H1 (cell line): ENCODE measurements at regions of chr10 and their contacts with region 1.

Region 1: DNA sequence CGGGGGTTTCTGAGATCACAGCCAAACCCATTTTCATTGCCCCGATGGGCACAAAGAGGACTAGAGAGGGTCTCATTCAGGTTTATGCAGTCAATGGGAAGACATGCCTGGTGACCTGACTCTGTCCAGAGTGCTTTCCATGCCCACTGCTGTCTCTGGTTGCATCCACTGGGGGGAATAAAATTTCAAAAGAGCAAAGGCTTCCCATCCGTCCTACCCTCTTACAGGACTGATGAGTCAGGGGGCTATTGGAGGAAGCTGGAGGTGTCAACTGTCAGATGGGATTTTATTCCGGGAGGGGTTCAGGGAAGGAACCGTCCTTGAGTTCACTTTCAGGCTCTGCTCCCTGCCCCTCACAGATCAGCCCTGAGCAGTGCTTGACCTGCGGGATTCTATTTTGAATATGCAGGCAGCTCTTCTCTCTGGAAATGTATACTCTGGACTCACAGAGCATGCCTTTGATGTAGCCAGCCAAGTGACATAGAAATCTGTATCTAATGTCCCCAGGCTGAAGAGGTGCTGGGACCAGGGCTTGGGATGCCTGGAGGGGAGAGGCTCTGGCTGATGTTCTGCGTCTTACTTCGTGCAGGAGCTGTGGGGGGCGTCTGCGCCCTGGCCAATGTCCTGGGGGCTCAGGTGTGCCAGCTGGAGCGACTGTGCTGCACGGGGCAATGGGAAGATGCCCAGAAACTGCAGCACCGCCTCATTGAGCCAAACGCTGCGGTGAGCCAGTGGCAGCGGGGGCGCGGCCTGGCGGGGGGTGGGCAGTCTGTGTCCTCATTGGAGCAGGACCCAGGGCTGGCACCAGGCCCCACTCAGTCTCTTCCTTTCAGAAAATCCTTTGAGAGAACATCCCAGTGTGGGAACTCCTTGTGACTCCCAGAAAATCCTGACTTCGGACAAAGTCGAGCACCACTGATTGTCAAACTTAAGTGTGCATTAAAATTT is 12.0 kb downstream of the C10orf62 start:
- DNase-seq: no peak
- H3K4me3 ChIP-seq: no peak overlapping the region
- H3K27ac ChIP-seq: no peak overlapping the region
- H3K4me1 ChIP-seq: peaks cover 0 to 2% (median under 1%) of the 10 kb centered on the region in 4 experiments; a peak in 1 of 7 replicates
- H3K27me3 ChIP-seq: no peaks in the 10 kb centered on the region
- CTCF ChIP-seq: no peak
- EP300 ChIP-seq: no peak
- POLR2A ChIP-seq: no peak
- RAD21 ChIP-seq: no peak

Region 2: GRCh38 chr10:97590082-97590747 is 11.3 kb before region 1 on chr10:
- CTCF ChIA-PET with region 1: interaction called, 15 read pairs
- POLR2A ChIA-PET with region 1: interaction called, 3 read pairs
- DNase-seq: no peak
- H3K4me3 ChIP-seq: no peak overlapping the region
- H3K27ac ChIP-seq: no peak overlapping the region
- H3K4me1 ChIP-seq: no peaks in the 10 kb centered on the region
- H3K27me3 ChIP-seq: no peaks in the 10 kb centered on the region
- CTCF ChIP-seq: no peak
- EP300 ChIP-seq: no peak
- POLR2A ChIP-seq: no peak
- RAD21 ChIP-seq: no peak

Region 3: DNA sequence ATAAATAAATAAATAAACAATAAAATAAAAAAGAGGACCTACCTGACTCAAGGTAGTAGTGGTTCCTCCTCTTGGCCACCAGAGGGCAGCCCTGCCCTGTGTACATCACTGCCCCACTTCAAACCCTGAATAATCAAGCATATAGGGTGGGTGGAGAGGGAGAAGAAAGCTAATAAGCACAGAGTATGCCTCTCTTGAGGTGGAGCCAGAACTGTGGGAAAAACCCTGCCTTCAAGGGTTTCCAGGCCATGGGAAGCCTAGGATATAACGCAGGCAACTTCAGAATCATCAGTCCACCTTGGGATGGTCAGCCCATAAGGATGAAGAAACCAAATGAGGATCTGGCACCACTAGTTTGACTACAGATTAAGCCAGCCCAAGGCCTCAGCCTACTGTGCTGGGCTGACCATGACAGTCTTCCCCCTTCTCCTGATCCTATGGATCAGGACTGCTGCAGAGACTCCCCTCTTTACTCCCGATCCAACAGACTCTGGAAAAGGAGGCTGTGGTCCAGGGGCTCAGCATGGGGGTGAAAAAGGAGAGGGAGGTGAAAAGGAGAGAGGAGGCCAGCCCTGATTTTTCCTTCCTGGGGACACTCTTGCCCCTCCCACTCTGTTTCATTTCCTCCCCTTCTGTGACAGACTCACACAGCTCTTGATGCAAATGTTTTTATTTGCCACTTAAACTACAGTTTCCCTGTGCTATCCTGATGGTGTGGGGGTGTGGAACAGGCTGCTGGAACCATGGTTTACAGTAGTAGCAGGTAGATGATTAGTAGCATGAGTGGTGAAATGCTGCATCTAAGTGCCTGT is 75.4 kb after region 1 on chr10:
- CTCF ChIA-PET with region 1: no interaction called
- POLR2A ChIA-PET with region 1: no interaction called
- DNase-seq: peak in 1 of 2 experiments; percentile 55
- H3K4me3 ChIP-seq: no peak overlapping the region
- H3K27ac ChIP-seq: no peak overlapping the region
- H3K4me1 ChIP-seq: no peaks in the 10 kb centered on the region
- H3K27me3 ChIP-seq: no peaks in the 10 kb centered on the region
- CTCF ChIP-seq: peak; percentile 75 to 85 (median 77)
- EP300 ChIP-seq: no peak
- POLR2A ChIP-seq: peak in 1 of 2 experiments; percentile 47; a peak in 1 of 3 replicates
- RAD21 ChIP-seq: peak; percentile 84 to 85